ENCODE measurements at regions of chr5 and their contacts with region 1.

Region 1: GRCh38 chr5:151051066-151051930 is 29.5 kb downstream of the TNIP1 start:
- DNase-seq: peak; percentile 82 to 87 (median 84)
- ATAC-seq: peak; percentile 35 to 88 (median 84)
- H3K4me3 ChIP-seq: no peak overlapping the region
- H3K27ac ChIP-seq: peak overlapping the region in 4 of 12 donors; percentile 23 to 50 (median 40)
- H3K4me1 ChIP-seq: peaks cover 0 to 31% (median 7%) of the 10 kb centered on the region in 12 donors
- H3K27me3 ChIP-seq: no peaks in the 10 kb centered on the region
- CTCF ChIP-seq: peak; percentile 77 to 92 (median 88)
- POLR2A ChIP-seq: no peak

Region 2: GRCh38 chr5:149904293-149904886 is 1146.9 kb before region 1 on chr5:
- intact Hi-C with region 1: no loop called
- DNase-seq: no peak
- ATAC-seq: peak in 2 of 4 donors; percentile 59 to 65
- H3K4me3 ChIP-seq: no peak overlapping the region
- H3K27ac ChIP-seq: no peak overlapping the region
- H3K4me1 ChIP-seq: peaks cover 0 to 5% (median 0%) of the 10 kb centered on the region in 12 donors
- H3K27me3 ChIP-seq: no peaks in the 10 kb centered on the region
- CTCF ChIP-seq: peak in 1 of 12 donors; percentile 6
- POLR2A ChIP-seq: no peak

Region 3: GRCh38 chr5:150801117-150801927 is 250.0 kb before region 1 on chr5:
- intact Hi-C with region 1: loop called in 1 of 10 experiments (anchors 10 kb)
- DNase-seq: peak in 2 of 5 donors; percentile 24 to 28
- ATAC-seq: peak; percentile 67 to 87 (median 86)
- H3K4me3 ChIP-seq: peak overlapping the region in 11 of 12 donors; percentile 3 to 56 (median 41)
- H3K27ac ChIP-seq: peak overlapping the region in 10 of 12 donors; percentile 2 to 72 (median 52)
- H3K4me1 ChIP-seq: peaks cover 0 to 10% (median 0%) of the 10 kb centered on the region in 12 donors
- H3K27me3 ChIP-seq: no peaks in the 10 kb centered on the region
- CTCF ChIP-seq: peak in 11 of 12 donors; percentile 28 to 62 (median 47)
- POLR2A ChIP-seq: no peak

Region 4: DNA sequence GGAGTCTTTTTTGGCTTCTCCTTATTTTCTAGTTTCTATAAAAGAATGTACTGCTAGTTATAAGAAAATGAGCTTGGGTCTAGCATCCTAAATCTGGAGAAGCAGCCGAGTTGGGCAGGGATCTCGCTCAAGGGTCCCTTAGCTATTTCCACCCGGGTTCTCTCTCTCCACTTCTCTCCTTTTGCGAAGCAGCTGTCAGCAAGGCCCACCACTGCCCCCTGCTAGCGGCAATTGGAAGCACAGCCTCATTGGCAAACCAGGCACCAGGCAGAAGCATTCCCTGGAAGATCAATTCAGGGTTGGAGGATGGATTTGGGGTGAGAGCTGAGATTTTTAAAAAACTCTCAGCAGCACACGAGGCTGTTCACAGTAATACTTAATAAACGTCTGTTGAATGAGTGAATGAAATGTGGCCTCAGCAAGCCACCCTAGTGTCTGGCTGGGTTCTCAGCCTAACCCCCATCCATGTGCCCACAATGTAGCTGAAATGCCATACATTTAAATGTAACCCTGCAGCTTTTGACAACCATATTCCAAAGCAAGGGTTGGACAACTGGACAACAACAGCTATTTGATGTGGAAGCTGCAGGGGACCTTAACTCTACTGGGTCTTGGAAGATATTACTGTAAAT is 64.1 kb after region 1 on chr5:
- intact Hi-C with region 1: loop called (anchors 1 to 2 kb)
- DNase-seq: peak; percentile 71 to 84 (median 76)
- ATAC-seq: peak; percentile 23 to 77 (median 62)
- H3K4me3 ChIP-seq: no peak overlapping the region
- H3K27ac ChIP-seq: peak overlapping the region in 1 of 12 donors; percentile 32
- H3K4me1 ChIP-seq: peaks cover 0 to 20% (median 9%) of the 10 kb centered on the region in 12 donors
- H3K27me3 ChIP-seq: no peaks in the 10 kb centered on the region
- CTCF ChIP-seq: peak; percentile 87 to 99 (median 94)
- POLR2A ChIP-seq: no peak

Region 5: GRCh38 chr5:151164686-151165392 is 113.5 kb after region 1 on chr5:
- intact Hi-C with region 1: loop called in 8 of 10 experiments (anchors 2 to 5 kb)
- DNase-seq: peak; percentile 60 to 76 (median 74)
- ATAC-seq: peak; percentile 87 to 92 (median 90)
- H3K4me3 ChIP-seq: no peak overlapping the region
- H3K27ac ChIP-seq: no peak overlapping the region
- H3K4me1 ChIP-seq: peaks cover 0 to 20% (median 9%) of the 10 kb centered on the region in 12 donors
- H3K27me3 ChIP-seq: no peaks in the 10 kb centered on the region
- CTCF ChIP-seq: peak; percentile 85 to 96 (median 93)
- POLR2A ChIP-seq: no peak

Measured in heart left ventricle (tissue), 16 donors.